ENCODE measurements at regions of chr10 and their contacts with region 1.

Region 1: DNA sequence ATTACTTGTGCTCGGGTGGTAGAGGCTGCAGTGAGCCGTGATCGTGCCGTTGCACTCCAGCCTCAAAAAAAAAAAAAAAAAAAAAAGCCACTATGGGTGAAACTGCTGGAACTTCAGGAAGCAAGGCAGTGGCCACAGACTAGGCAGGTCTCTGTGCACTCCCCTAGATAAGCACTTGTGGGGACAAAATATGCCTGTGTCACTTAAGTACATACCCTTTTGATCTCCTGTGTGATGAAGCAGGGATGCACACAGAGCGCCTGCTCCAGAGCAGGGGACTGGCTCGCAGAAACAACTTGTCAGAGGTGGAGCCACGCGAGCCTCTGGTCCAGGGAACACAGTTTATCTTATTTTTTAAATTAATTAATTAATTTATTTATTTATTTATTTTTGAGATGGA is 42.9 kb upstream of the PSAP start:
- DNase-seq: no peak
- H3K4me3 Mint-ChIP-seq: no peak overlapping the region
- H3K27ac Mint-ChIP-seq: no peak overlapping the region
- H3K4me1 Mint-ChIP-seq: peaks cover 10% of the 10 kb centered on the region
- H3K27me3 Mint-ChIP-seq: peaks cover 7% of the 10 kb centered on the region

Region 2: DNA sequence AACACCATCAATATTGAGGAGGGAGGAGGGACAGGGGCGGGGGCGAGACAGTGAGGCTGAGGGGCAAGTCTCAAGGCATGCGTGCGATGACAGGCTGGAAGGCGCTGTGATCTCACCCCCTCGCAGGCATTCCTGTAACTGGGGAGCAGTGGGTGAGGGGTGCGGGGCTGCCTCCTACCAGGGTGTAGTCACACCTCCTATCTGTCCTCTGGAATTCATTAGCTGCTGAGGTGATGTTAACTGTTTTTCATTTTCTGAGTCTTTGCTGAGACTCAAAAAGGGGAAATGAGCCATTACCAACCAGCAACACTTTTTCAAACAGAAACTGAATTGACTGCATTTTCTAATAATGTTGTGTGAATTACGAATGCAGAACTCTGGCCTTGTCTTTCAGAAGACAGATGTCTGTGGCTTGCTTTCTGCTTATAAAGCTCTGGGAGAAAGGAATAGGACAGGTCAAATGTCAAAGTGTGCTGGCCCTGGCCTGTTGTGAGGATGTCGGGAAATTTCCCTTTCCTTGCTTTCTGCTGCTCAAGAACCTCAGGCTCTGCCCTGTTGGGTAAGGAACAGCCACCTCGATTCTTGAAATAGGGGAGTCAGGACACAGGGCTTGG is 520.9 kb before region 1 on chr10:
- intact Hi-C with region 1: loop called (anchors 1 kb)
- DNase-seq: no peak
- H3K4me3 Mint-ChIP-seq: no peak overlapping the region
- H3K27ac Mint-ChIP-seq: no peak overlapping the region
- H3K4me1 Mint-ChIP-seq: peaks cover 14% of the 10 kb centered on the region
- H3K27me3 Mint-ChIP-seq: peaks cover 7% of the 10 kb centered on the region

Region 3: DNA sequence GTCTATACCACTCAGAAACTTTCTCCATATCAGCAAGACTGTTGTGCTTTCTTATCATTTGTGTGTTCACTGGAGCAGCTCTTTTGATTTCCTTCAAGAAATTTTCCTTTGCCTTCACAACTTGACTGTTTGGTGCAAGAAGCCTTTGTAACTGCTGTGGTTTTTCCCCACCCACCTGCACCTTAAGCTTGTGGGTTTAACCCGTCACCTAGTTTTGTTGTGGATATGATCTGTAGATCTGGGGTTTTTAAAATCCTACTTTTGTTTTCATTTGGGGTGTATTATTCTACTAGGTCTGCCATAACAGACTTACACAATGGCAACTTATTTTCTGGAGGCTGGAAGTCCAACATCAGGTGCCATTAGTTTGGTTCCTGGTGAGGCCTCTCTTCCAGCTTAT is 39.7 kb after region 1 on chr10:
- intact Hi-C with region 1: loop called (anchors 1 kb)
- DNase-seq: peak; percentile 37
- H3K4me3 Mint-ChIP-seq: peak overlapping the region; percentile 32
- H3K27ac Mint-ChIP-seq: peak overlapping the region; percentile 66
- H3K4me1 Mint-ChIP-seq: peaks cover 17% of the 10 kb centered on the region
- H3K27me3 Mint-ChIP-seq: peaks cover 13% of the 10 kb centered on the region

Region 4: DNA sequence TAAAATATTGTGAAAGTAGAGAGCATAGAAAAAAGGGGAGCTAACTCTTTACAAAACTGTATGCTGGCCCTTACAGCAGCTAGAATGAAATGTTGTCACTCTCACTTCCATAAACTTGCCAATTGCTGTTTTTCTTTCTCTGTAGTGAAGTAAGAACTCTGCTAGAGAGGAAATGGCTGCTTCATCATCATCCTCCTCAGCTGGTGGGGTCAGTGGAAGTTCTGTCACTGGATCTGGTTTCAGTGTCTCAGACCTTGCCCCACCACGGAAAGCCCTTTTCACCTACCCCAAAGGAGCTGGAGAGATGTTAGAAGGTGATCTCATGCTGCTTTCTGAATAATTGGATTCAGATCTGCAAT is 329.8 kb after region 1 on chr10:
- intact Hi-C with region 1: loop called (anchors 10 kb)
- DNase-seq: no peak
- H3K4me3 Mint-ChIP-seq: no peak overlapping the region
- H3K27ac Mint-ChIP-seq: peak overlapping the region; percentile 12
- H3K4me1 Mint-ChIP-seq: peaks cover 44% of the 10 kb centered on the region
- H3K27me3 Mint-ChIP-seq: no peaks in the 10 kb centered on the region